Right cardiac atrium (tissue), 5 donors: ENCODE measurements at regions of chr5 and their contacts with region 1.

Region 1: GRCh38 chr5:35198075-35198474 is 32.2 kb downstream of the PRLR start:
- DNase-seq: peak; percentile 73 to 93 (median 90)
- ATAC-seq: peak; percentile 87 to 90
- H3K4me3 ChIP-seq: no peak overlapping the region
- H3K27ac ChIP-seq: no peak overlapping the region
- H3K4me1 ChIP-seq: peaks cover 9% of the 10 kb centered on the region
- H3K27me3 ChIP-seq: no peaks in the 10 kb centered on the region

Region 2: DNA sequence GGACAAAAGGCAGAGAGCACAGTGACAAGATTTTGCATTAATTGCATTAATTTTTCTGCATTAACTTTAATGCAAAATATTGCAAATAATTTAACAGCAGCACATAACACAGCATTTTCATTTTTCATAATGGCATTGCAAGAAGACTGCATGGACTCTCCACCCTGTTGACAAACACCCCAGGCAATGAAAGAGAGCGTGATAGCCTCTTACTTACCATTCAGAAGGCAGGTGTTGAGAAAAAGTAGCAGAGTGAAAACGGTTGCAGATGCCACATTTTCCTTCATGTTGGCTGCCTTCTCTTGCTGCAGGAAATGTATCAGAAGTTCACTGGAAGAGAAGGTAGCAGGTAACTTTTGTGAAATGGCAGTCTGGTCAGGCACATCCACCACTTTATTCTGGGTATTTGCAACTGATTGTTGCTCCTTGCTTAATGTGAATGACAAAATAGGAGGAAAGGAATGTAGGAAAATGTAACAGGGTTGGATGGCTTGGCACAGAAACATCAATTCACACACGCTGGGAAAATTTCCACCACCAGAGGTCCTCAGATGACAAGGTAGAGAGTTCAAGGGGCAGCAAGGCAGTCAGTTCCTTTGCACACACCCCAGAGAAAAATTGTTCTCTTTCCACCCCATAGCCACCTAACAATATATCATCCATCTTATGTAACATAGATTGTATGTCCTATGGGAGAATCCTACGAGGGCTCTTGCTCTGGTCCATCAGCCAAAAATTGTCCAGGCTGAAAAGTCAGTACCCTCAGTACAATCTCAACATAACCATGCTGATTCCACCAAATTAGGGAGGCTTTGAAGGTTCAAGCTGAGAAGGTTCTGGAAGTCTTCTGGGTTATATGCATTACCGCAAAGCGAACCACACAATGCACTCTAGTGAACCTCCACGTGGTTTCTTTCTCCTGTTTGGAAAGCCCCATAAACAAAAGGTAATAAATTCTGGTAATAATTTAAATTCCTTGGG is 108.5 kb before region 1 on chr5:
- intact Hi-C with region 1: loop called in 2 of 4 experiments (anchors 10 kb)
- DNase-seq: peak in 2 of 3 donors; percentile 13 to 43
- ATAC-seq: peak; percentile 57 to 65
- H3K4me3 ChIP-seq: no peak overlapping the region
- H3K27ac ChIP-seq: no peak overlapping the region
- H3K4me1 ChIP-seq: no peaks in the 10 kb centered on the region
- H3K27me3 ChIP-seq: no peaks in the 10 kb centered on the region